OCI-LY7 (cell line): ENCODE measurements at regions of chr9 and their contacts with region 1.

Region 1: GRCh38 chr9:37156781-37157356 is 36.5 kb downstream of the ZCCHC7 start:
- DNase-seq: no peak
- H3K4me3 ChIP-seq: no peak overlapping the region
- H3K27ac ChIP-seq: no peak overlapping the region
- H3K4me1 ChIP-seq: peaks cover 23% of the 10 kb centered on the region
- CTCF ChIP-seq: no peak

Region 2: GRCh38 chr9:37144762-37145161 is 12.1 kb before region 1 on chr9:
- CTCF ChIA-PET with region 1: no interaction called
- POLR2A ChIA-PET with region 1: interaction called, 10 read pairs
- intact Hi-C with region 1: no loop called
- DNase-seq: peak; percentile 65
- H3K4me3 ChIP-seq: peak overlapping the region; percentile 61
- H3K27ac ChIP-seq: peak overlapping the region; percentile 74
- H3K4me1 ChIP-seq: peaks cover 85% of the 10 kb centered on the region
- CTCF ChIP-seq: no peak